Aorta (tissue), 5 donors: ENCODE measurements at regions of chr5 and their contacts with region 1.

Region 1: DNA sequence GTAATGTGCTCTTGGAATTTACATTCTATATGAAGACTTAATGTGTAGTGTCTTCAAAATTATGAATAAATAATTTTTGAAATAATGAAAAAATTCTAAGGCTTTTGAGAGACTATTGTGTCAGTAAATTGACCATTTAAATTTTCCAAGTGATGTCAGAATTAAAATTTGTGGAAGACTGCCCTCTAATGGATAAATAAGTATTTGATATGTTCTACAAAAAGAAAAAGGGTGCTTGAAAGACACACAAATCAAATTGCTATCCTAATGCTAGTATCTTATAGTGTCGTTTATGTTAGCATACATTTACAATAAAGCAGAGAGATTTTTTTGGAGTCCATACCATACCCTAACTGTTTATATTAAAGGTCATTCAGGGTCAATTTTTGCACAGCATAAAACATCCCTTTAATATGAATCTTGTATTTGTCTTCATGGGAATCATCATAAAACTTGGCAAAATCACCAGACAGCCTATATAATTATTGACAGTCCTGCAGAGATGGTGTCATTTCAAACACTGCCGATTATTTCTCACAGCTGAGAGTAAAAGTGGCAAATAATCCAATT is 120.8 kb upstream of the SLC27A6 start:
- DNase-seq: no peak
- ATAC-seq: no peak
- H3K4me3 ChIP-seq: no peak overlapping the region
- H3K27ac ChIP-seq: no peak overlapping the region
- H3K4me1 ChIP-seq: no peaks in the 10 kb centered on the region
- H3K27me3 ChIP-seq: no peaks in the 10 kb centered on the region

Region 2: GRCh38 chr5:128667152-128667551 is 177.3 kb before region 1 on chr5:
- intact Hi-C with region 1: loop called (anchors 2 to 10 kb)
- DNase-seq: no peak
- ATAC-seq: no peak
- H3K4me3 ChIP-seq: no peak overlapping the region
- H3K27ac ChIP-seq: no peak overlapping the region
- H3K4me1 ChIP-seq: no peaks in the 10 kb centered on the region
- H3K27me3 ChIP-seq: no peaks in the 10 kb centered on the region

Region 3: GRCh38 chr5:128974567-128974966 is 130.1 kb after region 1 on chr5:
- intact Hi-C with region 1: no loop called
- DNase-seq: no peak
- ATAC-seq: no peak
- H3K4me3 ChIP-seq: no peak overlapping the region
- H3K27ac ChIP-seq: no peak overlapping the region
- H3K4me1 ChIP-seq: no peaks in the 10 kb centered on the region
- H3K27me3 ChIP-seq: no peaks in the 10 kb centered on the region

Region 4: GRCh38 chr5:129027260-129027659 is 182.8 kb after region 1 on chr5:
- intact Hi-C with region 1: no loop called
- DNase-seq: no peak
- ATAC-seq: no peak
- H3K4me3 ChIP-seq: no peak overlapping the region
- H3K27ac ChIP-seq: no peak overlapping the region
- H3K4me1 ChIP-seq: no peaks in the 10 kb centered on the region
- H3K27me3 ChIP-seq: peaks cover 0 to 2% of the 10 kb centered on the region in 2 donors